ENCODE measurements at regions of chrX and their contacts with region 1.

Region 1: DNA sequence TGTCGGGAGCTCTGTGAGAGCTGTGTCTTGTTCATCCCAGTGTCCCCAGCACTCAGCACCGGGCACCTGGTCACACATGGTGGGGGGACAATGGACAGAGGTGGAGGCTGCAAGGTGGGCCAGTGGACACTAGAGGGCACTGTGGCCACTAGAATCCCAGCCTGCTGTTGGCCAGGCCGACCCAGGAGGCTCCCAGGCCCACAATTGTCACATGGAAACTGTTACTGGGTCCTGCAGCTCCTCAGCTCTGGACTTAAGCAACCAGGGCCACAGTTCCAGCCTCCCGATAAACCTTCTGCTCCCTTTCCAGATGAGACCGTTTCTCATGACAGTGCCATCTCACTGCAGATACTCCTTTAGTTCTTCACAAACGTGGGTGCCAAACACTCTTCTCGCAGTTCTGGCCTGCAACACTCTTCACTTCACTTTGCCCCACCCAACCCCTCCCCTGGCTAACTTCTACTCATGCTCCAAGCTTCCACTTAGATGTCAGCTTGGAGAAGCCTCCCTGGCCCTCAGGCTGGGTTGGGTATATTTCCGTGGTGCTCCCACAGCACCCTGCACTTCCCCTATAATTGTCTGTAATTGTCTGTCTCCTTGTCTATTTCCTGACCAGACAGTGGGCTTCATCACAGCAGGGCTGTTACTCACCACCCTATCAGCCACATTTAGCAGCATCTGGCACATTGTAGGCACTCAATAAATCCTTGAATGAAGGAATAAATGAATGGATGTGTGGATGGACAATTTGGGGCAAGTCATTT is 3.5 kb upstream of the IQSEC2 start:
- DNase-seq: peak in 13 of 14 experiments; percentile 11 to 71 (median 40)
- ATAC-seq: peak; percentile 57
- H3K4me3 ChIP-seq: no peak overlapping the region
- H3K4me3 Mint-ChIP-seq: no peak overlapping the region
- H3K27ac ChIP-seq: no peak overlapping the region
- H3K27ac Mint-ChIP-seq: no peak overlapping the region
- H3K4me1 ChIP-seq: peaks cover 38% of the 10 kb centered on the region
- H3K4me1 Mint-ChIP-seq: peaks cover 37% of the 10 kb centered on the region
- H3K27me3 ChIP-seq: no peaks in the 10 kb centered on the region
- H3K27me3 Mint-ChIP-seq: no peaks in the 10 kb centered on the region
- CTCF ChIP-seq: peak; percentile 66

Region 2: DNA sequence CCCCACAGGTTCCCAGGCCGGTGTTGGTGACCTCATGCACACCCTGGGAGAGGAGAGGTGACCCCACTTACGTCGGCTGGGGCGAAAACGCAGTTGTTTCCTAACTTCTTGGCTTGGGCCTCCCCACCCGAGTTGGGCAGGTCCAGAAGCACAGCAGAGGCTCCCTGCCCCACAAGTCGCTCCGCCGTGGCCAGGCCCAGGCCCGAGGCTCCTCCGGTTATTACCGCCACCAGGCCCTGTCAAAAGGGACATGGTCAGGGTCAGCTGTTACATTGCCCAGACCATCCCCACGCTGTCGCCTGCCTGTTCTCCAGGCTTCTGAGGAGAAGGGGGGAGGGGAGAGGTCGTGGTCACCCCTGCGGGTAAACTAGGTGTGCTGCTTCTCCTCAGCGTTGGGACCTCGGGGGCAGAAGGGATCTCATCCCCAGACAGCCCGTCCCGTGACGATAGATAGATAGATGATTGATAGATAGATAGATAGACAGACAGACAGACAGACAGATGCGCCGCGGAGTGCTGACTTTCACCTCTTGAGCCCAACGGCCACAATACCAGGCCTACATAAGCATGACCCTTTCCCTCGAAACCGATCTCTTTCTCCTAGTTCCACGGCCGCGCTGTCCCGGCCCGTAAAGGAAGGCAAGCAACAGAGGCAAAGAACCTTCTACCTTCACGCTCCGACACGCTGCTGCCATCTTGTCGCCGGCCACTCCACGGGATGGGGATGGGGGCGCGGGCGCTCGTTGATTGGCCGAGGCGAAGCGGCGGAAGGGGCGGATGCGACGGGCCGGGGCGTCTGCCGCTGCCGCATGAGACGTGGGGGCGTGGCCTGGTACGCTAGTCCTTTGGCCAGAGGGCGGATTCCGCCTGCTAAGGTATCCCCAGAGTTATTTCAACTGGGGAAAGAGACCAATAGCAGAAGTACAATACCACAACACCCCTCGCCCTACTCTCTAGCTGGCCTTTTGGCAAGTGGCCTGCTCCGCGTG is 149.1 kb after region 1 on chrX and contains the start of gene HSD17B10:
- CTCF ChIA-PET with region 1: no interaction called
- POLR2A ChIA-PET with region 1: no interaction called
- intact Hi-C with region 1: loop called in 1 of 2 experiments (anchors 10 kb)
- DNase-seq: peak; percentile 67 to 92 (median 80)
- ATAC-seq: peak; percentile 98
- H3K4me3 ChIP-seq: peak within 1 kb of the TSS; percentile 63
- H3K4me3 Mint-ChIP-seq: peak within 1 kb of the TSS; percentile 99
- H3K27ac ChIP-seq: peak within 1 kb of the TSS; percentile 34 to 39
- H3K27ac Mint-ChIP-seq: peak within 1 kb of the TSS; percentile 93
- H3K4me1 ChIP-seq: peaks cover 18% of the 10 kb centered on the region
- H3K4me1 Mint-ChIP-seq: peaks cover 16% of the 10 kb centered on the region
- H3K27me3 ChIP-seq: no peaks in the 10 kb centered on the region
- H3K27me3 Mint-ChIP-seq: peaks cover 3% of the 10 kb centered on the region
- CTCF ChIP-seq: no peak
- total RNA-seq, gene HSD17B10: 27.0 to 28.6 TPM

Region 3: GRCh38 chrX:53481816-53482465 is 197.1 kb after region 1 on chrX:
- CTCF ChIA-PET with region 1: no interaction called
- POLR2A ChIA-PET with region 1: no interaction called
- intact Hi-C with region 1: loop called in 1 of 2 experiments (anchors 5 kb)
- DNase-seq: peak; percentile 5 to 67 (median 30)
- ATAC-seq: no peak
- H3K4me3 ChIP-seq: no peak overlapping the region
- H3K4me3 Mint-ChIP-seq: no peak overlapping the region
- H3K27ac ChIP-seq: no peak overlapping the region
- H3K27ac Mint-ChIP-seq: no peak overlapping the region
- H3K4me1 ChIP-seq: peaks cover 3% of the 10 kb centered on the region
- H3K4me1 Mint-ChIP-seq: no peaks in the 10 kb centered on the region
- H3K27me3 ChIP-seq: no peaks in the 10 kb centered on the region
- H3K27me3 Mint-ChIP-seq: peaks cover 9% of the 10 kb centered on the region
- CTCF ChIP-seq: peak; percentile 60

Measured in CD4-positive, alpha-beta T cell (primary cell).